Activated CD4-positive, alpha-beta T cell treated with anti-CD3 and anti-CD28 coated beads, Interleukin-2, amount 10 ng/mL, durations not matched to agents 24 days and 14 days (primary cell): ENCODE measurements at regions of chr5 and their contacts with region 1.

Region 1: DNA sequence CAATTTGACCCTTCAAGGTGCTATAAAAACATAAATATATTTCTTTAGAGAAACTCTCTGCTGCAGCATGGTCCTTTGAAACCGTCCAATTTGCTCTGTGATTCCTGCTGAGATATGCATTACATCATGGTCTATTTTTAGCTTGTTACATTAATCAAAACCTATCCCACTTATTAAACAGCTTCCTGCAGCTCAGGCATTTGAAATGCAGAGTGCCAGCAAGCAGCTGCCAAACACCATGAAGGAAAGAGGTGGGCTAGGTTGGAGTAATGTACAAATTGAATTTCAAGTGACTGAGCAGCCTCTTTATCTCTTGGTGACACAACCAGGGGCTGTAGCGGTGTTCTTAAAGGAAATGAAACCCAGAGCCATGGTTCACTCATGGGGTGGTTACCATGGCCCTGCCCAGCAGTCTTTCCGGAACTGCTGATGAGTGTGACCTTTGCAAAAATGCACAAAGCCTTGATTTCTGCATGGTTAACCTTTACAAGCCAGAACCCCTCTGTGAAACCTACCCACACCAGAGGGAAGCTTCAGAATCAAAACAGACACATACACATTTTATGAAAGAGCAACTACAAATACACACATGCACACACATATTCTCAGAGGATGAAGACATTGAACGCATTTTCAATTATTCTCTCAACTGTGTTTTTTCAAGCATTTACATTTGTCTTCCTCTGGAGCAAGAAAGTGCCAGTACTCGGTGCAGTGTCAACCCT is 155.8 kb upstream of the ZNF608 start:
- DNase-seq: peak; percentile 66
- H3K4me3 Mint-ChIP-seq: peak overlapping the region; percentile 36
- H3K27ac Mint-ChIP-seq: peak overlapping the region; percentile 75
- H3K4me1 Mint-ChIP-seq: peaks cover 18% of the 10 kb centered on the region
- H3K27me3 Mint-ChIP-seq: no peaks in the 10 kb centered on the region

Region 2: DNA sequence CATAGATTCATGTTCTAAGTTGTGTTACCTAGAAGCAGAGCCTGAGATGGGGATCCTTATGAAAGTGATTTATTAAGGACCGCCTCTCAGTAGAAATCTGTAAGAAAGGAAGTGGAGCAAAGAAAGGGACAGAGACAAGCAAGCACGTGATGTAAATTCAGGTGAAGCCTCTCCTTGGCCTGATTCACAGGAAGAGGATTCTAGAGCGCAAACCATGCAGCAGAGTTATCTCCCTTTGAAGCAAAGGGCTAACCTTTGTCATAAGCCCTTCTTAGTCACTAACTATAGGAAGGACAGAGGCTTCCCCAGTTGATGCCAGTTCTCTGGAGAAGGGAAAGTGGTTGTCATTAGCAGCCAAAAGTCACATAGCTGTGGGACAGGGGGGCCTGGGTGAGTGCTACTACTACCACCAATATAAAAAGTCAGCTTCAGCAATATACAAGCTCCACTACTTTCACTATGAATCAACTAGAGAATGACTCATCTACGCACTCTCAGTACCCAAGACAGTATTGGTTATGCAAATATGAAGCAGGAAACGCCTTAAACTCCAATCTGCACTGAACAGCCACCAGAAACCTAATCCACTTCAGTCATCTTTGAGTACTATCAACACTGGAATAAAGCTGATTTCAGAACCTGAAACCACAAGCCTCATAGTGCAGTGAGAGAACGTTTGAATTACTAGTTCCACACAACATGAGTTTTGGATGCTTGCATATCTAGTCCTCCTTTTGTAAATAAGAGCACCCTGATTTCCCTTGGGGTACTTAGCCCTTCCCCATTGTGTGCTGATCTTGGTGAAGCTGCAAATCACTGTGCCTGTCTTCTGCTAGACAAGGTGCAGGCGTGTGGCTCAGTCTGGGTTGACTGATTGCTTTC is 318.5 kb before region 1 on chr5:
- intact Hi-C with region 1: loop called (anchors 10 kb)
- DNase-seq: peak; percentile 68
- H3K4me3 Mint-ChIP-seq: no peak overlapping the region
- H3K27ac Mint-ChIP-seq: no peak overlapping the region
- H3K4me1 Mint-ChIP-seq: peaks cover 11% of the 10 kb centered on the region
- H3K27me3 Mint-ChIP-seq: no peaks in the 10 kb centered on the region

Region 3: GRCh38 chr5:124920909-124921666 is 18.8 kb after region 1 on chr5:
- intact Hi-C with region 1: loop called (anchors 1 kb)
- DNase-seq: no peak
- H3K4me3 Mint-ChIP-seq: no peak overlapping the region
- H3K27ac Mint-ChIP-seq: no peak overlapping the region
- H3K4me1 Mint-ChIP-seq: peaks cover 2% of the 10 kb centered on the region
- H3K27me3 Mint-ChIP-seq: no peaks in the 10 kb centered on the region

Region 4: GRCh38 chr5:124935065-124935464 is 32.8 kb after region 1 on chr5:
- intact Hi-C with region 1: loop called (anchors 2 kb)
- DNase-seq: peak; percentile 69
- H3K4me3 Mint-ChIP-seq: no peak overlapping the region
- H3K27ac Mint-ChIP-seq: peak overlapping the region; percentile 67
- H3K4me1 Mint-ChIP-seq: peaks cover 6% of the 10 kb centered on the region
- H3K27me3 Mint-ChIP-seq: no peaks in the 10 kb centered on the region

Region 5: DNA sequence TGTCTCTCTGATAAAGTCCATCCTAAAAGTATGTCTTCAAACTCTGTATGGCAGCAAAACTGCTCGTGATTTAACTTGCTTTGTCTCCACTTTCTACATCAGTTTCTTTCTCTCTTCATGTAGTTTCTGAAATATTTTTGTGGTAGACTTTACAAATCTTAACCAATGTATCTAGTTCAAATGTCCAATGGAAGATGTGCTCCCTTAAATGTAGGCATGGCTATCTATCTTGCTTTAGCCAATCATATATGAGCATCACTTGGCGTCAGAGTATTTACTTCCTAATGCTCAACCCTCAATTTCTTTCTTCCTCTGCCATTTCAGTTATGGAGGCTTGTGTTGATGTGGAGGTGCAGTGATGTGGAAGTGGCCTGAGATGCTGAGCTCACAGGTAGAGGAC is 50.3 kb after region 1 on chr5:
- intact Hi-C with region 1: no loop called
- DNase-seq: no peak
- H3K4me3 Mint-ChIP-seq: no peak overlapping the region
- H3K27ac Mint-ChIP-seq: no peak overlapping the region
- H3K4me1 Mint-ChIP-seq: no peaks in the 10 kb centered on the region
- H3K27me3 Mint-ChIP-seq: no peaks in the 10 kb centered on the region